GM12878 (cell line): ENCODE measurements at regions of chr2 and their contacts with region 1.

Region 1: DNA sequence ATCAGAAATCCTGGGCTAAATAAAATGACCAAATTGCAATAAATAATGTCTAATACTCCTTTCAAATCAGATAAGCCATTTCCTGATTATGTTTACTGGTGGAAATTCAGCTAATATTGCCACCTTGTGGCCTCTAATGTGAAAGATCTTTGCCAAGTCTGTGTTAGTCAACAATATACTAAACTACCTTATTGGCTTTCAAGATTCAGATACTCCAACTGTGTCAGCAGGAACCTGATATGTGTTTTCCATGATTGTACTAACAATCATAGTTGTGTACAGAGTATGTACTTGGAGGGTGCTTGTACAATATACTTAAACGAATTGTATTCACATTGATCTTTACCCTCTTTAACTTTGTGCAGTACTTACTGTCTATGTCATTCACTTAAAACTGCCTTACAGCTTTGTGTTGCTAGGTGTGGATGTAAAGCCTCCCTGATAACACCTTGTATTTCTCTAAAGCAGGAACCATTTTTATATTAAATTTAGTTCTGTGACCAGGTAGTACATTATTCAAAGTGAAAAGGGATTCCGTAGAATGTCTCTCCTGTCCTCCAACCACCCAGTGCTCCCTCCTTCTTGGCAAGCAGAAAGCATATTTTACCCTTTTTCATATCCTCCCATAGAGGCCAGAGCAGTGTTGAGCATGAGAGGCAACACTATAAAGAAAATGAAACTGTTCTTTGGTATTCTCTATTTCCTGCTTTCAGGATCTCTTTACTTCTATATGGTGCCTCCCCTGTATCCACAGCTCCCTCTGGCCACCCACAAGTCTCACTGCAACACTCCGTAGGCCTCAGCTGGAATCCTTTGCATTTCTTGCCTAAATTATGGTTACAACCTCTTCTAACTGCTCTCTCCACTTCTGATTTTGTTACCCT is 75.2 kb upstream of the C2orf15 start:
- DNase-seq: peak; percentile 64
- ATAC-seq: peak; percentile 98
- H3K4me3 ChIP-seq: 0 out of 2 replicates have a peak overlapping the region, but pooled peaks have one; percentile 21
- H3K27ac ChIP-seq: peak overlapping the region; percentile 69
- H3K4me1 ChIP-seq: peaks cover 10% of the 10 kb centered on the region; the same call in 1 of the 2 replicates
- H3K27me3 ChIP-seq: no peaks in the 10 kb centered on the region
- CTCF ChIP-seq: peak; percentile 51 to 68 (median 61); a peak in 5 of 6 replicates
- EP300 ChIP-seq: no peak
- POLR2A ChIP-seq: no peak
- RAD21 ChIP-seq: peak; percentile 83

Region 2: GRCh38 chr2:98580656-98581284 is 485.5 kb before region 1 on chr2:
- CTCF ChIA-PET with region 1: interaction called, 3 read pairs
- POLR2A ChIA-PET with region 1: no interaction called
- RAD21 ChIA-PET with region 1: no interaction called
- SMC1A ChIA-PET with region 1: no interaction called
- in situ Hi-C with region 1: no loop called
- intact Hi-C with region 1: loop called (anchors 10 kb)
- DNase-seq: no peak
- ATAC-seq: peak; percentile 40; the same call in 2 of the 3 replicates
- H3K4me3 ChIP-seq: no peak overlapping the region
- H3K27ac ChIP-seq: no peak overlapping the region
- H3K4me1 ChIP-seq: peaks cover 8% of the 10 kb centered on the region; the same call in 1 of the 2 replicates
- H3K27me3 ChIP-seq: no peaks in the 10 kb centered on the region
- CTCF ChIP-seq: no peak
- EP300 ChIP-seq: no peak
- POLR2A ChIP-seq: no peak
- RAD21 ChIP-seq: 0 out of 2 replicates have a peak, but pooled peaks have one; percentile 4

Region 3: DNA sequence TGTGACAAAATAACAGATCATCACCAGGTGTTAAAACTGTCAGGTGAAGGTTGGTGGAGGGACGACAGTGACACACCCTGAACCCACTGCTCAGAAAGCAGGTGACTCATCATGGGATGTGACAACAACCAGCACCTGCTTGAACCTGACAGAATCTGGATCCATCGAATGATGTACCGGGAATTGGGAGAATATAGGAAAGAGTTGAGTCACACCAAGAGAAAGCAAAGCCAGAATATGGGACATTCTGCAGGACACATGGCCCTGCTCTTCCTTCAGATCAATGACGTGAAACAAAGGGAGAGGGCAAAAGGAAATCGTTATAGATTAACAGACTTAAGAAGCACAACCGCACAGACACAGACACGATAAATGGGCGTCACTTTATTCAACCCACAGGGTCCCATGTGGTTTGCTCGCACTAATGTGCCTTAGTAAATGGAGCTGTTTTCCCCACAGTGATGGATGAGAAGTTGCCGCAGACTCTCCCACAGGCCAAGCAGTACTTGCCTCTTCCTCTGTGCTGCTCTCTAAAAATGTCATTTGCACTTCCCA is 230.4 kb before region 1 on chr2:
- CTCF ChIA-PET with region 1: interaction called, 13 read pairs
- POLR2A ChIA-PET with region 1: no interaction called
- RAD21 ChIA-PET with region 1: interaction called, 3 read pairs
- SMC1A ChIA-PET with region 1: interaction called, 3 read pairs
- in situ Hi-C with region 1: no loop called
- intact Hi-C with region 1: loop called (anchors 1 kb)
- DNase-seq: peak; percentile 4
- ATAC-seq: peak; percentile 85
- H3K4me3 ChIP-seq: no peak overlapping the region
- H3K27ac ChIP-seq: no peak overlapping the region
- H3K4me1 ChIP-seq: no peaks in the 10 kb centered on the region
- H3K27me3 ChIP-seq: no peaks in the 10 kb centered on the region
- CTCF ChIP-seq: no peak
- EP300 ChIP-seq: peak in 1 of 2 experiments; percentile 68; a peak in 1 of 4 replicates
- POLR2A ChIP-seq: no peak
- RAD21 ChIP-seq: no peak

Region 4: GRCh38 chr2:99112617-99113016 is 46.3 kb after region 1 on chr2:
- CTCF ChIA-PET with region 1: interaction called, 4 read pairs
- POLR2A ChIA-PET with region 1: no interaction called
- RAD21 ChIA-PET with region 1: no interaction called
- SMC1A ChIA-PET with region 1: no interaction called
- in situ Hi-C with region 1: loop called (anchors 5 kb)
- intact Hi-C with region 1: no loop called
- DNase-seq: no peak
- ATAC-seq: no peak
- H3K4me3 ChIP-seq: no peak overlapping the region
- H3K27ac ChIP-seq: no peak overlapping the region
- H3K4me1 ChIP-seq: no peaks in the 10 kb centered on the region
- H3K27me3 ChIP-seq: no peaks in the 10 kb centered on the region
- CTCF ChIP-seq: no peak
- EP300 ChIP-seq: no peak
- POLR2A ChIP-seq: no peak
- RAD21 ChIP-seq: no peak

Region 5: GRCh38 chr2:99297994-99298393 is 231.7 kb after region 1 on chr2:
- CTCF ChIA-PET with region 1: no interaction called
- POLR2A ChIA-PET with region 1: no interaction called
- RAD21 ChIA-PET with region 1: no interaction called
- SMC1A ChIA-PET with region 1: no interaction called
- in situ Hi-C with region 1: no loop called
- intact Hi-C with region 1: no loop called
- DNase-seq: no peak
- ATAC-seq: peak; percentile 48
- H3K4me3 ChIP-seq: no peak overlapping the region
- H3K27ac ChIP-seq: no peak overlapping the region
- H3K4me1 ChIP-seq: no peaks in the 10 kb centered on the region
- H3K27me3 ChIP-seq: no peaks in the 10 kb centered on the region
- CTCF ChIP-seq: no peak
- EP300 ChIP-seq: no peak
- POLR2A ChIP-seq: no peak
- RAD21 ChIP-seq: no peak